Gastrocnemius medialis (tissue), 4 donors: ENCODE measurements at regions of chr10 and their contacts with region 1.

Region 1: DNA sequence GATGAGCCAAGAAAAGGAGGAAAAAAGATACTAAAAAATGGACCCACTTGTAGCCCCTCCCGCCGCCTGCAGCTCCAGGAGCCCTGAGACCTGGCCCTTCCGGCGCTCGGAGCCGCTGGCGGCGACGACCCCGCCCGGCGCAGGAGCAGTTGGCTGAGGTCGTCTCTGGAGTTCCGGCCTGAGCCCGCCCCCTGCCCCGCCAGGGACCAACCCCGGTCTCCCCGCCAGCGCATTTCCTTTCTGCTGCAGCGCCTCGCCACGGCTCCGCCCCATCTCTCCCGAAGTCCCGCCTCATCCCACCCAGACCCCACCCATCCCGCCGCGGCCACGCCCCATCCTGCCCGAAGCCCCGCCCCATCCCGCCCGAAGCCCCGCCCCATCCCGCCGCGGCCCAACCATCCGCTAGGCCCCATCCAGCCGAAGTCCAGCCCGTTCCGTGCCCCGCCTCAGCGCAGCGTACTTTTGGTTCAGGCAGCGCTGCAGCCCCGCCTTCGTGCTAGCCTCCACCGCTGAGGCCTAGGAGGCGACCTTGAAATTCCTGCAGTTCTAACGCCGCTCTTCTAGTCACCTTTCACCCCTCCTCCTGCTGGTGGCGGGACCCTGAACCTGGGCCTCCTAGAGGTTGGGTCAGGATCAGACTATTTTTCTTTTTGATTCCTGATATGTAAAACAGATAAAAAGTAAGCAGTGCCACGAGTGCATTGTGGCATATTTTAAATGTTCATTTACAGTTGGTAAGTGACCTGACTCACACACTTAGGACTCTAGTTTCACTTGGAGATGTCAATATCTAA is at the start of gene STN1:
- DNase-seq: peak; percentile 98
- ATAC-seq: peak; percentile 90 to 92
- H3K4me3 ChIP-seq: peak within 1 kb of the TSS; percentile 85 to 95 (median 89)
- H3K27ac ChIP-seq: peak within 1 kb of the TSS; percentile 92 to 98 (median 96)
- H3K4me1 ChIP-seq: peaks cover 31 to 33% of the 10 kb centered on the region in 2 donors
- H3K27me3 ChIP-seq: no peaks in the 10 kb centered on the region
- CTCF ChIP-seq: peak in 1 of 5 experiments; percentile 12
- POLR2A ChIP-seq: peak; percentile 96 to 97
- total RNA-seq, gene STN1: 15.1 to 24.7 (median 20.5) TPM

Region 2: GRCh38 chr10:103966671-103967447 is 48.6 kb after region 1 on chr10 and contains the start of gene SLK:
- in situ Hi-C with region 1: no loop called
- intact Hi-C with region 1: loop called (anchors 2 kb)
- DNase-seq: peak; percentile 68 to 80
- ATAC-seq: peak; percentile 88 to 91
- H3K4me3 ChIP-seq: peak within 1 kb of the TSS; percentile 71 to 97 (median 82)
- H3K27ac ChIP-seq: peak within 1 kb of the TSS; percentile 89 to 99 (median 92)
- H3K4me1 ChIP-seq: peaks cover 32 to 34% of the 10 kb centered on the region in 2 donors
- H3K27me3 ChIP-seq: no peaks in the 10 kb centered on the region
- CTCF ChIP-seq: peak in 1 of 5 experiments; percentile 20
- POLR2A ChIP-seq: peak; percentile 98
- total RNA-seq, gene SLK: 43.3 to 53.3 (median 49.8) TPM